Dendritic cell treated with granulocyte-macrophage colony-stimulating factor and Interleukin-4, amounts not matched to agents 40 ng/mL and 50 ng/mL, for 4 days (primary cell): ENCODE measurements at regions of chr3 and their contacts with region 1.

Region 1: DNA sequence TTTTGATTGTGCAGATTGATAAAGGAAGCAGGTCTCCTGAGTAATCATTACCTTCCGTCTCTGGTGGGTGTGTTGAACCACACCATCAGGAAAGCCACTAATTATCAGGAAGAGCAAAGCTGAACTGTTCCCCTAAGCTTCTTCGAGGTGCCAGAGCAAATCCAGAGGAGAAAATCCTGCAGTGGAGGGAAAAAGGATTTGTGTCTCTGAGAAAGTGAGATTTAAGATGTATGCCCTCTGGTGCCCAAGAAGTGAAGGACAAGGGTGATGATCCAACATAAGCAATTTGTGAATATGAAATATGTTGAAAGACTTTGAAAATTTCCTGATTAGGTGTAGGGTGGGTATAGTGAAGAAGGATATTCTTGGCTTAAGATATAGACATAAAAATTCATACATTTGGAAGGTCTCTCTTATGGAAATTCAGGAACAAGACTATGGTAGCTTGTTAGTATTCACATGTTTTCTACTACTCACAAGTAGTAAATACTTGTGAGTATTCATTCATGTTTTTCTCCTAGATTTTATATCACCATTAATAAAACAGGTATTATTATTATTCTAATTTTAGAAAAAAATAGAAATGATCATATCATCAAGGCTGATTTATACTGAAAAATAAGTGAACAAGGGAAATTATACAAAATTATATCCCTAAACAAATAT is 34.8 kb downstream of the COMMD2 start:
- H3K4me3 Mint-ChIP-seq: no peak overlapping the region
- H3K27ac Mint-ChIP-seq: no peak overlapping the region
- H3K4me1 Mint-ChIP-seq: no peaks in the 10 kb centered on the region
- H3K27me3 Mint-ChIP-seq: peaks cover 12% of the 10 kb centered on the region

Region 2: DNA sequence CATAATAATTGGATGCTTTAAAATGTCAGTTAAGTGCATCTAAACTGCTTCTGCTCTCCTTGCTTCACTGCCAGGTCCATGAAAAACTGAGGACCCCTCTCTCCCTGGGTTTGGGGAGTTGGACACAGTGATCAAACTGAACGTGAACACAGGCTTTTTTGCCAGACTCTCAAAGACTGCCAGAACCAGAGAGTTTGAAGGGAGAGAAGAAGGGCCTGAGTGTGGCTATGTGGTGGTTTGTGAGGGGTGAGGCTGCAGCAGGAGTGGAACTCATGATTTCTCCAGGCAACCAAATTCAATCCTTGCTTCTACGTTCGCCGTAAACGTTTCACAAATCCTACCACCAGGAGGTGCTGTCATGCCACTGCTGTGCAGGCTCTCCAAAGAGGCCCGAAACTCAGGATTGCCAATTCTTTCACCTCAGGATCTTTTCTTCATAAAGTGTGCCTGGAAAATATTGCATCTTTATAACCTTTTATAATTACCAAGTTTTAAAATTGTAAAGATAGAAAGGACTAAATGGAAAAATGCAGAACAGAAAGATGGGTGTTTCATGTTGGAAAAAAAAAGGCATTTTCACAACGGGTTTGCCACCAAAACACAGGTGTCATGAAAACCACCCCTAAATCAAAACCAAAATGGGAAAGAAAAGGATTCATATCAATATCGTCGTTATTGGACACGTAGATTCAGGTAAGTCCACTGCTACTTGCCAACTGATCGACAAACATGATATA is 223.3 kb before region 1 on chr3:
- intact Hi-C with region 1: loop called (anchors 1 kb)
- H3K4me3 Mint-ChIP-seq: no peak overlapping the region
- H3K27ac Mint-ChIP-seq: no peak overlapping the region
- H3K4me1 Mint-ChIP-seq: peaks cover 23% of the 10 kb centered on the region
- H3K27me3 Mint-ChIP-seq: peaks cover 21% of the 10 kb centered on the region

Region 3: GRCh38 chr3:149512209-149512782 is 205.2 kb before region 1 on chr3:
- intact Hi-C with region 1: loop called (anchors 5 kb)
- H3K4me3 Mint-ChIP-seq: no peak overlapping the region
- H3K27ac Mint-ChIP-seq: no peak overlapping the region
- H3K4me1 Mint-ChIP-seq: peaks cover 28% of the 10 kb centered on the region
- H3K27me3 Mint-ChIP-seq: peaks cover 18% of the 10 kb centered on the region

Region 4: GRCh38 chr3:149566292-149566975 is 151.1 kb before region 1 on chr3:
- intact Hi-C with region 1: loop called (anchors 10 kb)
- H3K4me3 Mint-ChIP-seq: no peak overlapping the region
- H3K27ac Mint-ChIP-seq: no peak overlapping the region
- H3K4me1 Mint-ChIP-seq: no peaks in the 10 kb centered on the region
- H3K27me3 Mint-ChIP-seq: peaks cover 37% of the 10 kb centered on the region